ENCODE measurements at regions of chr18 and their contacts with region 1.

Region 1: GRCh38 chr18:62425465-62426195 is 97.2 kb upstream of the ZCCHC2 start:
- DNase-seq: peak; percentile 92
- H3K4me3 Mint-ChIP-seq: peak overlapping the region; percentile 62
- H3K27ac Mint-ChIP-seq: peak overlapping the region; percentile 84
- H3K4me1 Mint-ChIP-seq: peaks cover 37% of the 10 kb centered on the region
- H3K27me3 Mint-ChIP-seq: no peaks in the 10 kb centered on the region

Region 2: DNA sequence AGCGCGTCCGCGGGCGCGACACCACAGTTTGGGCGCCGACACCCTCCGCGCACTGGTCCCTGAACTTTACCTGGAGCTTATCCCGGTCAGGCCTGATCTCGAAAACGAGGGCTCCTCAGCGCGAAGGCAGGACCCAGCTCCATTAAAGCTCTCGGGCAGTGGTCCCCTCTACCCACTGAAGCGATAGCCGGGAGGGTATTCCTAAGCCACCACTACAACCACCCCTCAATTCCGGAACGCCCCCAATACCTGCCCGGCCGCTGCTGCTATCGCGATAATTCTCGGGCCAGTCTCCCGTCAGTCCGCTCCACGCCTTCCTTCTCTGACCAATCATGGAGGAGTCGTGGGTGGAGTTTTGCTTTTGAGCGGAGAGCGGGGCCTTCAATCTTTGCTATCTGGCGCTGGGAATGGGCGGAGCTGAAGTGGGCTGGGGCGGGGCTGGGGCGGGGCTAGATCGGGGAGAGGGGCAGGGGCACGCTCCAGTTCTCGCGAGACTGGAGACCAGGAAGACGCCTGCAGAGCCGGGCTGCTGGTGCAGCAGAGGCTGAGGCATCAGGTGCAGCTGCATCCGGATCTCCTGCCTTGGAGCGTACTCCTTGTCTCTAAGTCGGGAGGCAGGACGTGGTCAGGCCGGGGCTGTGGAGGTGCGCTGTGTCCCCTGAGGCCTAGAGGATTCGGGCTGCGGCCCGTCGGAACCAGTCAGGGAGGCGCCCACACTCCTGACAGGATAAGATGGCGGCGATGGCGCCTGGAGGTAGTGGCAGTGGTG is 238.7 kb before region 1 on chr18 and contains the starts of genes PIGN and RELCH:
- intact Hi-C with region 1: loop called (anchors 2 kb)
- DNase-seq: peak; percentile 98
- H3K4me3 Mint-ChIP-seq: peak within 1 kb of the TSS; percentile 100
- H3K27ac Mint-ChIP-seq: peak within 1 kb of the TSS; percentile 97
- H3K4me1 Mint-ChIP-seq: peaks cover 42% of the 10 kb centered on the region
- H3K27me3 Mint-ChIP-seq: no peaks in the 10 kb centered on the region
- total RNA-seq, gene PIGN: 32.0 and 33.9 TPM in 2 replicates
- total RNA-seq, gene RELCH: 30.6 and 31.1 TPM in 2 replicates

Region 3: DNA sequence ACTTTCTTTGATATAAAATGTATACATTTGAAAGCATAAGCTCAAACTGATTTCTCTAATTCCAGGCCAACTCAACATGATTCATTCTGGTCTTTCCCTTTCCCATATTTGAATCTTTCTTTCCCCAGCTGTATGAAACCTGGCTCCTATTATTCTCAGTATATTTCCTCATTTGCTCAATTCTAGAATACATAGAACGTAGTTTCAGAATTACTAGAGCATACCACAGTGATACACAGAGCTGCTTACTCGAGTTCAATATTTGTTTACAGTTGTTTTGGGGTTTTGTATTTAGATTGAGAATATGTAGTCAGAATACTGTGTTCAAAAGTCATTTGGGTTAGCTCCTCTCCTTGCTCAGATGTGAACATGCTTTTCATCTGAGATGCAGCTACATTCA is 57.5 kb before region 1 on chr18:
- intact Hi-C with region 1: loop called (anchors 1 kb)
- DNase-seq: no peak
- H3K4me3 Mint-ChIP-seq: peak overlapping the region; percentile 32
- H3K27ac Mint-ChIP-seq: peak overlapping the region; percentile 85
- H3K4me1 Mint-ChIP-seq: peaks cover 48% of the 10 kb centered on the region
- H3K27me3 Mint-ChIP-seq: no peaks in the 10 kb centered on the region

Region 4: DNA sequence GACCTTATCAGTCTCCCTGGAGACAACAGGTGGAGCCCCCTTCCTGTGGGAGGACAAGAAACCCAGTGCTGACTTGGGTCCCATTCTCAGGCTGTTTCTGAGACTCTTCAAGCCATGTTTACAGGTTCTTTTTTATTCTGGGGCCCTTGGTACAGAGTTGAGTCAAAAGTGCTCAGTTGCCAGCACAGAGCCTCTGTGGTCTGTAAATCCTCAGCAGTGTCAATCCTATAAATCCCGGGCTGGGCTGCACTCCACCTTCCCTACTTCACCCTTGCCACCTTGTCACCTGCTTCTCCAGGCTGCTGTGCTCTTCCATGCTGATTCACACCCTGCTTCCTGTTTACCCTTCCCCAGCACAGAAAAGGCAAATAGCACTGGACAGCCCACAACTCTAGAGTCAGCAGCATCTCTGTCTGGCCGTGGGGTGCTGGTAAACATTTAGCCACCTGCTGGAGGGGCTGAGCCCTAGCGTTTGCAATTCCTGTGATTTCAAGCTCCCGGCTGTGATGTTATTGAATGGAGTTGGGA is 25.8 kb before region 1 on chr18:
- intact Hi-C with region 1: loop called (anchors 2 kb)
- DNase-seq: no peak
- H3K4me3 Mint-ChIP-seq: peak overlapping the region; percentile 33
- H3K27ac Mint-ChIP-seq: peak overlapping the region; percentile 75
- H3K4me1 Mint-ChIP-seq: peaks cover 36% of the 10 kb centered on the region
- H3K27me3 Mint-ChIP-seq: no peaks in the 10 kb centered on the region

Region 5: GRCh38 chr18:62505669-62506494 is 80.3 kb after region 1 on chr18:
- intact Hi-C with region 1: loop called (anchors 1 kb)
- DNase-seq: peak; percentile 81
- H3K4me3 Mint-ChIP-seq: peak overlapping the region; percentile 79
- H3K27ac Mint-ChIP-seq: peak overlapping the region; percentile 98
- H3K4me1 Mint-ChIP-seq: peaks cover 23% of the 10 kb centered on the region
- H3K27me3 Mint-ChIP-seq: no peaks in the 10 kb centered on the region

Region 6: GRCh38 chr18:62584241-62585120 is 158.9 kb after region 1 on chr18:
- intact Hi-C with region 1: loop called (anchors 1 kb)
- DNase-seq: peak; percentile 94
- H3K4me3 Mint-ChIP-seq: peak overlapping the region; percentile 59
- H3K27ac Mint-ChIP-seq: peak overlapping the region; percentile 82
- H3K4me1 Mint-ChIP-seq: peaks cover 40% of the 10 kb centered on the region
- H3K27me3 Mint-ChIP-seq: no peaks in the 10 kb centered on the region

Region 7: DNA sequence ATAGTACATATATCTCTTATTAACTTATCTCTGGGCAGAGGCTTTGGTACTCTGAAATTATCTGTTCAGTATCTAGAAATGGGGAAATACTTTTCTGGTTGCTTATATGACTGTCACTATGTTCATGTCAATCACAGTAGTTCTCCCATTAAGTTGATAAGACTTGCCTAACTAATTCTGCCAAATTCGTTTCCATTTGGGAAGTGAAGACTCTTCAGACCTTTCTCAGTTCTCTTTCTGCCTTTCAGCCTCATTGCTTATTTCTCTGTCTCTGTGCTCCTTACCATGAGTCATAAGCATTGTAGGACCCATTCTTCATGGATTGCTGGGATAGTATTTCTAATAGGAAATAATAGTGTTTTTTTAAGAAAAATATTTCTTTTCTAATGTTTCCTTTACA is 403.2 kb after region 1 on chr18:
- intact Hi-C with region 1: no loop called
- DNase-seq: no peak
- H3K4me3 Mint-ChIP-seq: no peak overlapping the region
- H3K27ac Mint-ChIP-seq: no peak overlapping the region
- H3K4me1 Mint-ChIP-seq: peaks cover 4% of the 10 kb centered on the region
- H3K27me3 Mint-ChIP-seq: no peaks in the 10 kb centered on the region

Region 8: GRCh38 chr18:62982600-62983251 is 557.1 kb after region 1 on chr18:
- intact Hi-C with region 1: loop called (anchors 2 kb)
- DNase-seq: peak; percentile 88
- H3K4me3 Mint-ChIP-seq: no peak overlapping the region
- H3K27ac Mint-ChIP-seq: no peak overlapping the region
- H3K4me1 Mint-ChIP-seq: peaks cover 6% of the 10 kb centered on the region
- H3K27me3 Mint-ChIP-seq: no peaks in the 10 kb centered on the region

Measured in activated CD4-positive, alpha-beta T cell treated with anti-CD3 and anti-CD28 coated beads, Interleukin-2, amount 10 ng/mL, durations not matched to agents 24 days and 14 days (primary cell).